T-cell (primary cell): ENCODE measurements at regions of chr2 and their contacts with region 1.

Region 1: DNA sequence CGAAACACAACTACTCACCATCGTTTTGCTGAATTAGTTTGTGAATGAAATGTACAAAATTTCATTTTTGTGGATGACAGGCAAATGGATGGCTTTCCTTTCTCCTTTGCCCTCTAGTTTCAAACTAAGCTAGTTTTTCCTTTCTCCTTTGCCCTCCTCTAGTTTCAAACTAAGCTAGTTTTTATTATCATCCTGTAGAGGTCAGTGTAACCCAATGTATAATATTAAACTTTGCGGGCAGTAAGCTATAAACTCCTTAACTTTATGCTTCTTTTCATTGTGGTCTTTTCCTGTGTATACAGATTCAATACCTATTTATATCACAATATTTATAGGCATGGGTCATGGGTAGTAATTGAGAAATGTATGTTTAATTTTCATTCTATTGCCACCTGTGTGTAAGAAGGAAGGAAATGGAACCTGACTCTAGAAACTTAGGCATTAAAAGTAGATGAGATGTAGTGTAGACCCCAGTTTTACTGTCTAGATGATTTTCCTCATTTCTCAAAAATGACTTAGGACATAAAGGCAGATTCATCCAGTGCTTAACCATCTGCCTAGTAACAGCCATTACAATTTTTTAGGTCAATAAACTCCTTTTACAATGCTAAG is 58.1 kb downstream of the MAP3K19 start:
- DNase-seq: peak in 1 of 35 experiments; percentile 49
- ATAC-seq: peak in 1 of 4 experiments; percentile 46
- H3K4me3 ChIP-seq: no peak overlapping the region
- H3K4me3 Mint-ChIP-seq: no peak overlapping the region
- H3K27ac ChIP-seq: no peak overlapping the region
- H3K27ac Mint-ChIP-seq: no peak overlapping the region
- H3K4me1 ChIP-seq: no peaks in the 10 kb centered on the region
- H3K4me1 Mint-ChIP-seq: no peaks in the 10 kb centered on the region
- H3K27me3 ChIP-seq: peaks cover 0 to 10% of the 10 kb centered on the region in 2 experiments
- H3K27me3 Mint-ChIP-seq: peaks cover 0 to 8% of the 10 kb centered on the region in 2 donors

Region 2: DNA sequence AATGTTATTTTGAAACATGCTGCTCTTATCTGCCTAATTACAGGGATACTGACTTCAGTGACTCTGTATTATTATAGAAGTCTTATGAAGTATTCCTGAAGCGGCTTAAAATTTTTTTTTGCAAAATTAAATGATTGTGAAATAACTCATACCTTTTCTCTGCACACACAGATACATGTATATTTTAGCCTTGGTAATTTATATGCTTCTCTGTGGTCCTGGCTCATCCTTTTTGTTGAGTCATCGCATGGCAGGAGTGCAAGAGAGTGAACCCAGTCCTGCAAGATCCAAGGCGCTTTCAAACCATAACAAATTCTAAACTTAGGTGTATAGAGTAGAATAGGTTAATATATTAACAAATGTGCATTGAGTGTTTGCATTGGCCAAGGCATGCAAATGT is 61.9 kb before region 1 on chr2:
- CTCF ChIA-PET with region 1: no interaction called
- POLR2A ChIA-PET with region 1: no interaction called
- DNase-seq: no peak
- ATAC-seq: no peak
- H3K4me3 ChIP-seq: no peak overlapping the region
- H3K4me3 Mint-ChIP-seq: peak overlapping the region in 1 of 3 donors; percentile 60
- H3K27ac ChIP-seq: no peak overlapping the region
- H3K27ac Mint-ChIP-seq: no peak overlapping the region
- H3K4me1 ChIP-seq: peaks cover 20 to 27% of the 10 kb centered on the region in 2 experiments
- H3K4me1 Mint-ChIP-seq: peaks cover 73 to 87% (median 85%) of the 10 kb centered on the region in 3 donors
- H3K27me3 ChIP-seq: no peaks in the 10 kb centered on the region
- H3K27me3 Mint-ChIP-seq: no peaks in the 10 kb centered on the region

Region 3: GRCh38 chr2:134952608-134953007 is 36.5 kb before region 1 on chr2:
- CTCF ChIA-PET with region 1: no interaction called
- POLR2A ChIA-PET with region 1: no interaction called
- DNase-seq: no peak
- ATAC-seq: no peak
- H3K4me3 ChIP-seq: no peak overlapping the region
- H3K4me3 Mint-ChIP-seq: no peak overlapping the region
- H3K27ac ChIP-seq: no peak overlapping the region
- H3K27ac Mint-ChIP-seq: no peak overlapping the region
- H3K4me1 ChIP-seq: peaks cover 3% of the 10 kb centered on the region in 2 experiments
- H3K4me1 Mint-ChIP-seq: peaks cover 22 to 26% (median 23%) of the 10 kb centered on the region in 3 donors
- H3K27me3 ChIP-seq: no peaks in the 10 kb centered on the region
- H3K27me3 Mint-ChIP-seq: no peaks in the 10 kb centered on the region

Region 4: DNA sequence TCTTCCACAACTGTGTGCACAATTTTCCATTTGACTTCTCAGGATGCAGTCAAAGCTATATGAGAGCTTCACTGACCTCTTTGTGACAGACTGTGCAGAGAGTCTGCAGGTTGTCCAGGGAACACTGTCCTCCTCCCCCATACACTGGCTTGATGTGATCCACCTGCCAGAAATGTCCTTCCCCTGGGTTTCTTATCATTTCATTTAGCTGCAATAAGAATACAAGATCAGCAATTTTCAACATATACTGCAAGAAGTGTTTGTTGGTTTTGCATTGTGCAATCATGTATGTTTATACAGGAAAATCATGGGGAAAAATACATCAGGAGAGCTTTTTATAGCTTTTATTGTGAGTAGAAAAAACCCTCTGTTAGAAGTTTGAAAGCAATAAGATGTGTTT is 213.7 kb after region 1 on chr2:
- CTCF ChIA-PET with region 1: interaction called in 1 of 2 experiments, 17 read pairs
- POLR2A ChIA-PET with region 1: no interaction called
- DNase-seq: no peak
- ATAC-seq: no peak
- H3K4me3 ChIP-seq: no peak overlapping the region
- H3K4me3 Mint-ChIP-seq: no peak overlapping the region
- H3K27ac ChIP-seq: no peak overlapping the region
- H3K27ac Mint-ChIP-seq: no peak overlapping the region
- H3K4me1 ChIP-seq: no peaks in the 10 kb centered on the region
- H3K4me1 Mint-ChIP-seq: no peaks in the 10 kb centered on the region
- H3K27me3 ChIP-seq: no peaks in the 10 kb centered on the region
- H3K27me3 Mint-ChIP-seq: no peaks in the 10 kb centered on the region

Region 5: DNA sequence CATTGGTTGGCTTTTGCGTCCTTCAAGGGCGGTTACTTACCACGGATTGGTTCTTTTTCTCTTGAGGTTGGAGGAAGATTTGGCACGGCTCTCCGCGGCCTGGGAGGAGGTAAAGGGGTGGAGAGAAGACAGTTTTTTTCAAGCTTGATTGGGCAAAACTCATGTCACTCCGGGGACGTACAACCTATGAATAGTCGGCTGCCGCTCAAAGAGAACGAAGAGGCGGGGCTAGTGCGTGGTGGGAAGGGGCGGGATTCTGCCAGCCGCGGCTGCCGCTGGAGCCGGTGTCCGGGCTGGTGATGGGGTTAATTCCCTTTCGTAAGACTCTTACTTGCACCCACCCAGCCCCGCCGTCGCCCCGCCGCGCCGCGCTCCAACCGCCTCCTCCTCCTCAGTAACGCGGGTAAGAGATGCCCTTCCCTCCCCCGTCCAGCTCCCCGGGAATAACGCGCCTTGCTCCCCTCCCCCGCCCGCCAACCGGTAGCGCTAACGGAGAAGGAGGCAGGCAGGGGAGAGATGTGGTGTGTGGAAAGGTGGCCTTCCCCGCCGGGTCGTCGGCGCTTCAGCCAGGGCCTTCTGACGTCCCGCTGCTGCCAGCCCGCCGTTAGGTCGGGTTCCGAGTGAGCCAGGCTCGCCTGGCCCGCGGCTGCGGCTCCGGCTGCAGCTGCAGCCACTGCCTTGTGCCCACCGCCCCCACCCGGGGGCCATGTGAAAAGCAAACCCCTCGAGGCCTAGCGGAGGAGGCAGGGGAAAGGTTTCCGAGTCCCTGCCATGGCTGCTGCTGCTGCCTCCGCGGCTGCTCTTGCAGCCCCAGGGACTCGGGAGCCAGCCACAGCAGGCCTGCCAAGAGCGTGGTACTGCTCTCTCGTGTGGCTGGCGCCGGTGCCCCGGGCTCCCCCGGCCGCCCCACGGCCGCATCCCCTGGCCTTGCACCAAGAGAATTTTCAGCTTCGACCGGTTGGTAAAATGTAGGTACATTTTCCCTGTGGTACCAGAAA is 542.4 kb after region 1 on chr2 and contains the start of gene R3HDM1:
- CTCF ChIA-PET with region 1: no interaction called
- POLR2A ChIA-PET with region 1: no interaction called
- DNase-seq: peak; percentile 81 to 99 (median 95)
- ATAC-seq: peak; percentile 82 to 85 (median 83)
- H3K4me3 ChIP-seq: peak within 1 kb of the TSS; percentile 89 to 91
- H3K4me3 Mint-ChIP-seq: no peak within 1 kb of the TSS
- H3K27ac ChIP-seq: peak within 1 kb of the TSS; percentile 91
- H3K27ac Mint-ChIP-seq: peak within 1 kb of the TSS; percentile 41 to 83
- H3K4me1 ChIP-seq: peaks cover 12 to 22% of the 10 kb centered on the region in 2 experiments
- H3K4me1 Mint-ChIP-seq: peaks cover 23 to 30% (median 28%) of the 10 kb centered on the region in 3 donors
- H3K27me3 ChIP-seq: no peaks in the 10 kb centered on the region
- H3K27me3 Mint-ChIP-seq: no peaks in the 10 kb centered on the region
- total RNA-seq, gene R3HDM1: 38.4 to 44.8 (median 41.9) TPM

Region 6: GRCh38 chr2:135797497-135798274 is 808.6 kb after region 1 on chr2:
- CTCF ChIA-PET with region 1: interaction called, 6 to 10 read pairs
- POLR2A ChIA-PET with region 1: no interaction called
- DNase-seq: peak; percentile 56 to 87 (median 71)
- ATAC-seq: peak; percentile 77 to 89 (median 86)
- H3K4me3 ChIP-seq: no peak overlapping the region
- H3K4me3 Mint-ChIP-seq: no peak overlapping the region
- H3K27ac ChIP-seq: no peak overlapping the region
- H3K27ac Mint-ChIP-seq: no peak overlapping the region
- H3K4me1 ChIP-seq: peaks cover 0 to 10% of the 10 kb centered on the region in 2 experiments
- H3K4me1 Mint-ChIP-seq: peaks cover 9 to 23% (median 14%) of the 10 kb centered on the region in 3 donors
- H3K27me3 ChIP-seq: peaks cover 0 to 5% of the 10 kb centered on the region in 2 experiments
- H3K27me3 Mint-ChIP-seq: no peaks in the 10 kb centered on the region

Region 7: DNA sequence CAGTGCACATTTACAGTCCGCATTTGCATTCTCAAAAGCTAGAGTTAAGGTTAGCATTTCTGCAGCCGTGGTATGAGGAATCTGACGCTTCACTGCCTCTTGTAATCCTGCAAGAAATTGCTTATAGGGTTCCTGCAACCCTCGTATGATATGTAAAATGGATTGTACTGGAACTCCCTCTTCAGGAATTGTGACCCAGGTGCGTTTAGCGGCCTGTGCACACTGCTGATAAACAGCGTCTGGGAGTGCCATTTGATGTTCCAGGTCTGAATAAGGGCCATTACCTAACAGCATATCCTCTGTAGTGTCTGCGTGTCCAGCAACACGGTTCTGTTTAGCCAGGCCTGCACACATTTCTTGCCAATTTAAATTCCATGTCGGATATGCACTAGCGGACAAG is 1086.4 kb after region 1 on chr2:
- CTCF ChIA-PET with region 1: no interaction called
- POLR2A ChIA-PET with region 1: no interaction called
- DNase-seq: no peak
- ATAC-seq: no peak
- H3K4me3 ChIP-seq: no peak overlapping the region
- H3K4me3 Mint-ChIP-seq: no peak overlapping the region
- H3K27ac ChIP-seq: no peak overlapping the region
- H3K27ac Mint-ChIP-seq: no peak overlapping the region
- H3K4me1 ChIP-seq: no peaks in the 10 kb centered on the region
- H3K4me1 Mint-ChIP-seq: peaks cover 0 to 4% (median 4%) of the 10 kb centered on the region in 3 donors
- H3K27me3 ChIP-seq: no peaks in the 10 kb centered on the region
- H3K27me3 Mint-ChIP-seq: no peaks in the 10 kb centered on the region